ENCODE measurements at regions of chr5 and their contacts with region 1.

Region 1: DNA sequence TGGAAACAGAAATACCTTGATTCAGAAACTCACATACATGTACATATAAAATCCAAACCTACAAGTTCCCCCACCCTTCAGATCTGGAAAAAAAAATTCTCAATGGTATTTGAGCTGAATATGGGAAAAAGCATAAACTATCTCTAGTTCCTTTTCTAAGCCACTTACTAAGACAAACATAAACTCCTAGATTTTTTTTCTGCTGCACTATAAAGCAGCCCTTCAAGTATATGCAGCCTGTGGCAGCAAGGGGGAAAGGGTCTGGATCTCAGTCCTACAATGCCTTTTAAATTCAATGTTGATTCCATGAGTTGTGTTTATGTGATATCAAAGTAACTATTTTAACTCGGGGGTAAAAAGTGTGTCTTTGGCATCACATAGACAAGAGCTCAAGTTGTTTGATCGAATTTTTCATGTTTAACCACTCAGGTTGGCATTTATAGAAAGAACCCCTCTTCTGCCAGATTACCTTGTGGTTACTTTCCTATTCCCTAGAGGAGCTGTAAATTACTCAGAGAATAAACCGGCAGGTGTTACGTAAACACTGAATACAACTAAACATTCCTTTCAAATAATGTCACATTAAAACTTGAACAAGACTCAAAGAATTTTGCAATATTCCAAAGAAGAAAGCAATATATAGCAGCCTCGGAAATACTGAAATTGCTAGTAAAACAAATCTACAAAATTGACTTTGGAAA is 91.8 kb upstream of the FER start:
- DNase-seq: no peak

Region 2: DNA sequence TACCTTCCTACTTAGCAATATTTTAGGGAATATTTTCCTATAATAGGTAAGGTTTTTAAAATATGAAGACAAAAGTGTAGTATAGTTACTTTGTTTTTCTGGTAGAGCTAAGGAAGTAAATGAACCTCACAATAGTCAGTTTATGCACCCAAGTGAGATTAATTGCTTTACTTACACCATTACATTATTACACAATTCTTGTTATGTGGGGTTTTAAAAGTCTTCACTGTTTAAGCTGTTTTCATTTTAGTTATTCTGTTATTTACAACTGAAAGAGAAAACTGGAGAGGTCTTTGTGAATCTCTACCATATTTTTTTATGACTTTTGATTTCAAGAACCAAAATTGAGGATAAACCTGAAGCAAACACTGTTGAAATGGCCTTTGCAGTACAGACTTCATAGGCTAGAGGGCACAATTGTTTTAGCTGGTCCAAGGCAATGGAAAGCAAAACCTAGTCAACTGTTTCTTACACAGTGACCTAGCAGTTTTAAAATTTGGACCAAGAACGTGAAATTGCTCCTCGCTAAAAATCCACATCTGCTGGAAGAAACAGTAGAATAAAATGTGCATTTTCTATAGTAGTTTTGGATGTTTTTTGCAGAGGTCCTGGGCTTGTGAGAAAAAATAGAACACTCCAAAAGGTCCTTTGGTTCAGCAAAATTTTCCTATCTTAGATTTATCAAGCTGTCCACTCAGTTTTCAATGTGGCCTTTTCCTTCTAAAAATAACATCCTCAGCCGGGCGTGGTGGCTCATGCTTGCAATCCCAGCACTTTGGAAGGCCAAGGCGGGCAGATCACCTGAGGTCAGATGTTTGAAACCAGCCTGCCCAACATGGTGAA is 25.4 kb after region 1 on chr5:
- intact Hi-C with region 1: loop called in 1 of 2 experiments (anchors 2 kb)
- DNase-seq: peak; percentile 84